ENCODE measurements at regions of chr3 and their contacts with region 1.

Region 1: DNA sequence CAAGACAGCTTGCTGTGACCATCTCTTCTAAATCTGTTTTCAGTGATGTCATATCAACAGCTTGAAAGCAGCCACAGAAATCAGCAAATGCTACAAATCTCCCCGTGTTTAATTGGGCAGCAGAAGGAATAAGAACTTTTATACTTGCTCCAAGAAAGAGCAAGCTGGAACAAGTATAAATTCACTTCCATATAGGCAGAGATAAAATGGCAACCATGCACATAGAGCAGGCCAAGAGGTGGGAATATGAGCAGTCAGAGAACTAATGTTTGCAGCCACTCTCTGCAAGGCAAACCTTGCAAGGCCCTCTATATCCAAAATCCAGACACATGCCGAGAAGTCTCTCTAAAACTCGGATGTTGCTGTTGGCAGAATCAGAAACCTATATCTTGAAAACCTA is 16.0 kb downstream of the PARP9 start:
- DNase-seq: no peak
- H3K4me3 ChIP-seq: no peak overlapping the region
- H3K27ac ChIP-seq: no peak overlapping the region
- H3K27me3 ChIP-seq: no peaks in the 10 kb centered on the region
- CTCF ChIP-seq: no peak

Region 2: DNA sequence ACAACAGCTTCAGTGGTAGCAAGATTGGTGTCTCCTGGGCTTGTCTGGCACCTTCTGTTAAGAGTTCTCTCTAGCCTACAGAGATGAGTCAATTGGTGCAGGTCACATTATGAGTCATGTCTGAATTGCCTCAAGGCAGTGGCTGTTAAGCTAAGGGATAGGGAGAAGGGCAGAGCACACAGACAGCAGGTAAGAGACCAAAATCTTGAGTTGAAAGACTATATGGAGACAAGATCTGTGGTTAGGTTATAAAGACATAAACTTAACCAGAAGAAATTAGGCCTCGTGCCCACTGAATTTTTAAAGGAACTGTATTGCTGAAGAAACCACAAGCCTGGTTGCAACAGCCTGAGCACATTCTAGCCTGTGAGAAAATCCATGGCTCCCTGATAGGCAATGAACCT is 14.1 kb before region 1 on chr3:
- CTCF ChIA-PET with region 1: no interaction called
- POLR2A ChIA-PET with region 1: no interaction called
- DNase-seq: peak; percentile 24
- H3K4me3 ChIP-seq: no peak overlapping the region
- H3K27ac ChIP-seq: no peak overlapping the region
- H3K27me3 ChIP-seq: no peaks in the 10 kb centered on the region
- CTCF ChIP-seq: no peak

Region 3: DNA sequence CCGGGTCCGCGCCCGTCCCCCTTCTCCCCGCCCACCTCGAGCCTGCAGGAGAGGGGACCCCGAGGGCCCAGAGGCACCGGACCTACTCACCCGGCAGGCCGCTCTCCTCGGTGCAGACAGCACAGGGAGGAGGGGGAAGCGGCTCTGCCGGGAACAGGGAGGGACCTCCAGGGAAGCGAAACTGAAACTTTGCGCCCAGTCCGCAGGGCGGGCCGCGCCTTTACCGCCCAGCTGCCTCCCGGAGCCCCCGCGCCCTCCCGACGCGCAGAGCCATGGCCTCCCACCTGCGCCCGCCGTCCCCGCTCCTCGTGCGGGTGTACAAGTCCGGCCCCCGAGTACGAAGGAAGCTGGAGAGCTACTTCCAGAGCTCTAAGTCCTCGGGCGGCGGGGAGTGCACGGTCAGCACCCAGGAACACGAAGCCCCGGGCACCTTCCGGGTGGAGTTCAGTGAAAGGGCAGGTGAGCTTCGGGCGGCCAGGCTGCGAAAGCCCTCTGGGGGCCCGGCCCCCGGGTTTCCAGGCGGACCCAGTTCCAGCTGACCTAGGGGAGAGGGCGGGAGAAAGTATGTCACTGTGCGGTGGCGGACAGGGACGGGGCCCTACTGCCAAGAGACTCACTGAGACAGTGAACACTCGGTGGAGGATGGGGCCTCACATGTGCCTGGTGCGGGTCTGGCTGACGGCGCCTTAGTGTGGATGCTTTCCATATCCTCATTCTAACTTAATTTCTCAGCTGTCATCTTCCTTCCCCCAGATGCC is 16.3 kb after region 1 on chr3 and contains the starts of genes DTX3L and PARP9:
- CTCF ChIA-PET with region 1: interaction called, 10 read pairs
- POLR2A ChIA-PET with region 1: no interaction called
- DNase-seq: no peak
- H3K4me3 ChIP-seq: peak within 1 kb of the TSS; percentile 82
- H3K27ac ChIP-seq: peak within 1 kb of the TSS; percentile 73
- H3K27me3 ChIP-seq: no peaks in the 10 kb centered on the region
- CTCF ChIP-seq: no peak
- polyA plus RNA-seq, gene DTX3L: 7.0 and 8.3 TPM in 2 replicates
- polyA plus RNA-seq, gene PARP9: 18.9 and 24.4 TPM in 2 replicates

Region 4: DNA sequence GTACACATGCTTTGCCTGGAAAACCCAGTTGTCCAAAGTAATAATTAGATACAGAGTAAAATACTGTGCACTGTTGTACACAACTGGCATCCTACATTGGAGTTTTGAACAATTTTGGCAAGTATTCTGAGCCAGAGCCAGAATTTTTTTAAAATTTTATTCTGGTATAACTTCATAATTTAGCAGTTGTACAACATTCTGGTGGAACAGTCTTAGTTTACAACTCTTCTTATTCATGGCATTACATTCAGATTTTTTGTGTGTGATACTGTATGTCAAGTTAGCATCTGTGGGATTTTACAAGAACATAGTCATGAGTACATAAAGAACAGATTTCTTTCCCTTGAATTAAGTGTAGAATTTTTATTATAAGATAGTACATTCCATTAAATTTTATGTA is 314.3 kb after region 1 on chr3:
- CTCF ChIA-PET with region 1: no interaction called
- POLR2A ChIA-PET with region 1: no interaction called
- DNase-seq: no peak
- H3K4me3 ChIP-seq: no peak overlapping the region
- H3K27ac ChIP-seq: no peak overlapping the region
- H3K27me3 ChIP-seq: no peaks in the 10 kb centered on the region
- CTCF ChIP-seq: no peak

Measured in AG04450 (cell line).